ENCODE measurements at regions of chr14 and their contacts with region 1.

Region 1: DNA sequence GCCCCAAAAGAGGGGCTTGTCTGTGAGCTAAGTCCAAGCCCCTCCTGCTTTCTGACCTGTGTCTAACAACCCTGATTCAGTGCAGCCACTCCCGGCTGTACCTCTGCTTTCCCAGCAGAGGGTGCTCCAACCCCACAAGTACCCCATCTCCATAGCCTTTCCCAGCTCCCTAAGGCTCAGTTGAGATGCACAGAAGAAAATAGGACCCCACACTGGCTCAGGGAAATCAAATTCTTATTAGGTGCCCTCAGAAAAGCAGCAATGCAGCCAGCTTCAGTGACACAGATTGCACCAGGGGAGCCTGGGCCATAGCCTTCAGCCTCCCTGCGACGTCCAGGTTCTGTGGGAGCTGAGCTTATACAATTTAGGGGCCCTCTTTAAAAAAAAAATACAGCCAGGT is 49.9 kb downstream of the LRRC74A start:
- DNase-seq: peak; percentile 23 to 76
- H3K4me3 ChIP-seq: no peak overlapping the region
- H3K27ac ChIP-seq: no peak overlapping the region
- H3K4me1 ChIP-seq: peaks cover 0 to 3% (median 0%) of the 10 kb centered on the region in 4 experiments; a peak in 1 of 7 replicates
- H3K27me3 ChIP-seq: no peaks in the 10 kb centered on the region; a peak in 2 of 7 replicates
- CTCF ChIP-seq: peak; percentile 97
- EP300 ChIP-seq: no peak
- POLR2A ChIP-seq: no peak
- RAD21 ChIP-seq: peak; percentile 100

Region 2: DNA sequence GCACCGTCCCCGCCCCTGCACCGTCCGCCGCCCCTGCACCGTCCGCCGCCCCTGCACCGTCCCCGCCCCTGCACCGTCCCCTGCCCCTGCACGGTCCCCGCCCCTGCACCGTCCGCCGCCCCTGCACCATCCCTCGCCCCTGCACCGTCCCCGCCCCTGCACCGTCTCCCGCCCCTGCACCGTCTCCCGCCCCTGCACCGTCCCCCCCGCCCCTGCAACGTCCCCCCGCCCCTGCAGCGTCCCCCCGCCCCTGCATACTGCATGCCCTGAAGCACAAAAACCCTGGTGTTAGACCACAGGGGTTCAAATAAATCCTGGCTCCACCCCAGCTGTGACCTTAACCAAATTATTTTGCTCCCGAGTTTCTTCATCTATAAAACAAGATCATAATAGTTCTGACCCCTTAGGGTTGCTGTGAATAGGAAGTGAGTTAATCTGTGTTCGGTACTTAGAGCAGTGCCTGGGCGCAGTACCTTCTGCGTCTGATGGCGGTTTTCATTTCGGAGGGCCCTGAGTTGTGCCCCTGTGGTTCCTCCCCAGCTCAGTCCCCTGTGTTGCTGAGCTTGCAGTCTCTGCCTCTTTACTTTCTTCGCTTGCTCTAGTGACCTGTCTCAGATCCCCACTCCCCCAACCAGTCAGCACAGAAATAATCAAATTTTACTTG is 462.0 kb before region 1 on chr14:
- CTCF ChIA-PET with region 1: no interaction called
- POLR2A ChIA-PET with region 1: no interaction called
- DNase-seq: no peak
- H3K4me3 ChIP-seq: peak overlapping the region; percentile 41 to 69 (median 58); a peak in 7 of 8 replicates
- H3K27ac ChIP-seq: no peak overlapping the region
- H3K4me1 ChIP-seq: peaks cover 0 to 18% (median 8%) of the 10 kb centered on the region in 4 experiments; a peak in 6 of 7 replicates
- H3K27me3 ChIP-seq: no peaks in the 10 kb centered on the region
- CTCF ChIP-seq: no peak
- EP300 ChIP-seq: no peak
- POLR2A ChIP-seq: no peak
- RAD21 ChIP-seq: no peak

Region 3: GRCh38 chr14:76887196-76887595 is 11.1 kb after region 1 on chr14:
- CTCF ChIA-PET with region 1: interaction called, 189 read pairs
- POLR2A ChIA-PET with region 1: no interaction called
- DNase-seq: no peak
- H3K4me3 ChIP-seq: no peak overlapping the region
- H3K27ac ChIP-seq: no peak overlapping the region
- H3K4me1 ChIP-seq: peaks cover 0 to 6% (median 3%) of the 10 kb centered on the region in 4 experiments; a peak in 4 of 7 replicates
- H3K27me3 ChIP-seq: peaks cover 0 to 3% (median 1%) of the 10 kb centered on the region in 4 experiments; a peak in 1 of 7 replicates
- CTCF ChIP-seq: no peak
- EP300 ChIP-seq: no peak
- POLR2A ChIP-seq: no peak
- RAD21 ChIP-seq: no peak

Region 4: GRCh38 chr14:76956316-76957090 is 80.4 kb after region 1 on chr14:
- CTCF ChIA-PET with region 1: interaction called, 11 read pairs
- POLR2A ChIA-PET with region 1: no interaction called
- DNase-seq: peak; percentile 91 to 94
- H3K4me3 ChIP-seq: peak overlapping the region; percentile 11 to 48 (median 26); a peak in 5 of 8 replicates
- H3K27ac ChIP-seq: peak overlapping the region; percentile 83
- H3K4me1 ChIP-seq: peaks cover 35 to 48% (median 41%) of the 10 kb centered on the region in 4 experiments
- H3K27me3 ChIP-seq: no peaks in the 10 kb centered on the region
- CTCF ChIP-seq: no peak; a peak in 1 of 4 replicates
- EP300 ChIP-seq: peak; percentile 36 to 88
- POLR2A ChIP-seq: peak in 1 of 2 experiments; percentile 25; a peak in 2 of 3 replicates
- RAD21 ChIP-seq: peak in 1 of 2 experiments; percentile 24; a peak in 2 of 4 replicates

Region 5: GRCh38 chr14:77007975-77008421 is 131.9 kb after region 1 on chr14:
- CTCF ChIA-PET with region 1: interaction called, 12 read pairs
- POLR2A ChIA-PET with region 1: no interaction called
- DNase-seq: no peak
- H3K4me3 ChIP-seq: no peak overlapping the region
- H3K27ac ChIP-seq: no peak overlapping the region
- H3K4me1 ChIP-seq: peaks cover 8 to 31% (median 15%) of the 10 kb centered on the region in 4 experiments; a peak in 6 of 7 replicates
- H3K27me3 ChIP-seq: no peaks in the 10 kb centered on the region
- CTCF ChIP-seq: no peak
- EP300 ChIP-seq: no peak
- POLR2A ChIP-seq: no peak
- RAD21 ChIP-seq: no peak

Region 6: DNA sequence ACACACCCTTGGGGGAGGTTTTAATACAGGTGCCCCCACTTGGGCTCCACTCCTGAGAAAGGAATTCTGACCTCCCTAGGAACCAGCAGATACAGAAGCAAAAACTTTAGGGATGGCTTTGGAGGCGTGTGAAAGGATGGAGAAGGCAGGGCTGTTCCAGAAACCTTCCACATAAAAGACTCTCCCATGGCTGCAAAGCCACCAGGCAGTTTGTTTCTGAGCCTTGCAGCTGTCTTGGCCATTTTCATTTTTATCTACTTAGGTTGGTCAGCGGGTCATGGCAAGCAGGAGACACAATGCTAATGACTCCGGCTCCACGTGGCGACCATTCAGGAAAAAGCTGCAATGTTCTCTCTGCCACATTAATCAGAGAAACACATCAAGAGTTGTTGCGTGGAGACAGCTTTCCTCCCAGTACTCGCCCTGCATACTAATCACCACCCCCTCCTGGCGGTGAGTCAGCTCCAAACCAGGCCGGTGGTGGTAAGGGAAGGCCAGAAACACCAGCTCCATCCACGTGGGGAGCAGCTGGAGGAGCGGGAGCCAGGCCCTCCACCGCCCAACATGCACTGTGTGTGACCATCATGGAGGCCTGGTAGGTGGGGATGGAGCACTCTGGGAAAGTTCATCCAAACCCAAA is 183.3 kb after region 1 on chr14:
- CTCF ChIA-PET with region 1: interaction called, 258 read pairs
- POLR2A ChIA-PET with region 1: no interaction called
- DNase-seq: no peak
- H3K4me3 ChIP-seq: no peak overlapping the region
- H3K27ac ChIP-seq: no peak overlapping the region
- H3K4me1 ChIP-seq: peaks cover 3 to 12% (median 4%) of the 10 kb centered on the region in 4 experiments; a peak in 5 of 7 replicates
- H3K27me3 ChIP-seq: no peaks in the 10 kb centered on the region
- CTCF ChIP-seq: peak; percentile 46 to 60 (median 55)
- EP300 ChIP-seq: no peak
- POLR2A ChIP-seq: no peak
- RAD21 ChIP-seq: peak; percentile 47 to 56; a peak in 3 of 4 replicates

Region 7: GRCh38 chr14:77151918-77152588 is 276.0 kb after region 1 on chr14:
- CTCF ChIA-PET with region 1: interaction called, 13 read pairs
- POLR2A ChIA-PET with region 1: no interaction called
- DNase-seq: no peak
- H3K4me3 ChIP-seq: no peak overlapping the region
- H3K27ac ChIP-seq: no peak overlapping the region
- H3K4me1 ChIP-seq: peaks cover 2 to 15% (median 2%) of the 10 kb centered on the region in 4 experiments; a peak in 3 of 7 replicates
- H3K27me3 ChIP-seq: no peaks in the 10 kb centered on the region
- CTCF ChIP-seq: peak in 1 of 3 experiments; percentile 12; a peak in 1 of 4 replicates
- EP300 ChIP-seq: no peak
- POLR2A ChIP-seq: no peak
- RAD21 ChIP-seq: peak; percentile 29 to 43